ENCODE measurements at regions of chr1 and their contacts with region 1.

Region 1: GRCh38 chr1:86227026-86227425 is 70.5 kb upstream of the COL24A1 start:
- DNase-seq: peak; percentile 23
- H3K4me3 ChIP-seq: no peak overlapping the region
- CTCF ChIP-seq: no peak

Region 2: GRCh38 chr1:86194491-86195034 is 32.5 kb before region 1 on chr1:
- in situ Hi-C with region 1: loop called (anchors 5 kb)
- DNase-seq: peak; percentile 12
- H3K4me3 ChIP-seq: no peak overlapping the region
- CTCF ChIP-seq: no peak

Region 3: GRCh38 chr1:86296305-86297205 is 69.5 kb after region 1 on chr1:
- in situ Hi-C with region 1: no loop called
- DNase-seq: no peak
- H3K4me3 ChIP-seq: no peak overlapping the region
- CTCF ChIP-seq: no peak

Measured in astrocyte of the cerebellum (primary cell).